ENCODE measurements at regions of chr6 and their contacts with region 1.

Region 1: GRCh38 chr6:95365454-95365853 is 211.9 kb upstream of the MANEA start:
- DNase-seq: no peak

Region 2: GRCh38 chr6:95203153-95203754 is 162.2 kb before region 1 on chr6:
- CTCF ChIA-PET with region 1: interaction called, 11 read pairs
- POLR2A ChIA-PET with region 1: no interaction called
- DNase-seq: peak; percentile 30